WTC11 (cell line): ENCODE measurements at regions of chr14 and their contacts with region 1.

Region 1: DNA sequence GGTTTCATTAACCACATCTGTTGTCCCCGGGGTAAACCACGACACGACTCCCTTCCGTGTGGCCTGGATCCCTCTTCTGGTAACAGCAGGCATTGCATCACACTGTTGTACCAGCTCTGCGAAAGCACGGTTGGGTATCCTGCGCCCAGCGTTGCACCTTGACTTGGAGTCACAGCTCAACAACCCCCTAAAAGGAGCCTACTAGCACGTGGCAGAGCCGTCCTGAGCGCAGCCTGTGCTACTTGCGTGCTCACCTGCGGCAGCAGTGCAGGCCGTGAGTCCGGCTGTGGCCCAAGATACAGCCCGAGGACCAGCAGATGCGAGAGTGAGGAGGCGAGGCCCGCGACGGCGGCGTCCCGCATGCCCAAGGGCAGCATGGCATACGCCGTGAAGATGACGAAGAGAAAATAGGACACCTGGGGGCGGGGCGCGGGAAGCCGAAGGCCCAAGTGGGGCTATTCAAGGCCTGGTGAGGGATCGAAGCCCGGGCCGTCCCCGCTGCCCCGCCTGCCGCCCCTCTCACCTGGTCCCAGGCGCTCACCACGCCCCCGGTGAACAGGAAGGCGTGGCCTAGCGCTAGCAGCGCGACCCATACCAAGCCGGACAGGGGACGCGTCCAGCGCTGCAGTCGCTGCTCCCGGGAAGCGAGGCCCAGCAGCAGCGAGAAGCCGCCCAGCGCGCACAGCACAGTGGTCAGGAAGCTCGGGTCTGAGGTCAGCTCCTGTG is 2.4 kb downstream of the ADCY4 start:
- DNase-seq: peak; percentile 82
- ATAC-seq: peak; percentile 72
- H3K4me3 Mint-ChIP-seq: peak overlapping the region; percentile 78
- H3K27ac Mint-ChIP-seq: no peak overlapping the region
- H3K4me1 Mint-ChIP-seq: peaks cover 24% of the 10 kb centered on the region
- H3K27me3 Mint-ChIP-seq: peaks cover 92% of the 10 kb centered on the region
- CTCF ChIP-seq: peak; percentile 68

Region 2: DNA sequence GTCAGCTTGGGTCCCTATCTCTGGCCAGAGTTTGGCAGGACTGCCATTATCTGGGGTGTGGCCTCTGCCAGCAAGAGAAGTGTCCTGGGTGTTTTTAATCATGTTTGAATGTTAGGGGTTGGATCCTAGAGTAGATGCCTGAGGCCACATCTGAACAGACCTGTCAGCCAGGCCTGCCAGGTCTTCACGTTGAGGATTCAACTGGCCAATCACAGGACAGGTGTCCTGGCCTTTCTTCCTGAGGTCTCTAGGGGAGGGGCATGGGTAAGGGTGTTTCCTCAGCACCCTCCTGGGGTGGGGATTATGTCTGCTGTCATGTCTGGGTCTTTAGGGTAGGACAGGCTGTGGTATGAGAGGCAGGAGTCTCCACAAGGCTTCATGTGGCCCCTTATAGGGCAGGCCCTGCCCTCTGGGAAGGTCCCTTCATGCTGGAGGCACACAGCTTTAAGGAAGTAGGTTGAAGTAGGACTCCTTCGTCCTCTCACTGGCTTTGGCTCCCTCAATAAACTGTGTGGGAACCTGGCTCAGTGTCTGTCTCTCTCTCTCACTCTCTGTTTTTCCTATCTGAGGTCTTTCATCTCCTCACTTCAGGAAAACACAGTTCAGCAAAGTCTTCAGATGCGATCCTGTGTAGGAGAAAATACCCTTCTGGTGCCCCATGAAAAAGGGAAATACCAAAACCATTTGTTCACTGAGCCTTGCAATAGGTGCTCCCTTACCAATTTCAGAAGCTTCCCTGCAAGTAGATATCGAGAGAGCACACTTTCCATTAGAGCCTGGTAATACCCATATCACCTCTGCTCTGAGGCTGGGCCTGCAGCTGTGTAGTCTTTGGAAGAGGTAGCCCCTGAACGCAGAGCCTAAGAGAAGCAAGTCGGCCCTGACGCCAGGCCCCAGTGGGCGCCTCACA is 208.7 kb before region 1 on chr14:
- CTCF ChIA-PET with region 1: no interaction called
- POLR2A ChIA-PET with region 1: no interaction called
- DNase-seq: no peak
- ATAC-seq: peak; percentile 41; the same call in 1 of the 2 replicates
- H3K4me3 Mint-ChIP-seq: no peak overlapping the region
- H3K27ac Mint-ChIP-seq: no peak overlapping the region
- H3K4me1 Mint-ChIP-seq: no peaks in the 10 kb centered on the region
- H3K27me3 Mint-ChIP-seq: no peaks in the 10 kb centered on the region
- CTCF ChIP-seq: no peak

Region 3: DNA sequence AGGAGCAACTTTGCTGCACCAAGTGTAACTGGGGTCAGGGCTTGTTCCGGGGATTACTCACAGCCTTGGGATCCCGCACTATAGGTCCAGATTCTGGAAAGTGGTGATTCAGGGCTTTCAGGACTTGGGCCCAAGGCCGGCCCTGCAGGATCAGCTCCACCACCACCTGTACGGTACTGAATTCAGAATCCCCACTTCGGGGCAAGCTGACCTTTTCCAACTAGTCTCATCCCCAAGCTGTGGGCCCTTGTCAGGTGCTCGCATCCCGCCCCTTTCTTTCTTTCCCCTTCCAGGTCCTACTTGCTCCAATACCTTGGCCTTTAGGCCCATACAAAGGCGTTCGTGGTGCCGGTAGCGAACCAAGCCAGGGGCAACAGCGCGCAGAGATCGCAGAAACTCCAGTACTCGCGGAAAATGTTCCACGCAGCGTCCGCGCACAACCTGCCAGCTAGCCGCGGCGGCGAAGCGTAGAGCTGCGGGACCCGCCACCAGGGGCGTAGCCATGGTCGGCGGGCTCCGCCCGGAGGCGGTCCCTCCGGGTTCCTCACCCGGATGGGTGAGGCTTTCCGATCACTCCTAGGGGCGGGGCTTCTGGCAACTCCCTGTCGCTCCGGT is 90.5 kb before region 1 on chr14:
- CTCF ChIA-PET with region 1: interaction called, 32 read pairs
- POLR2A ChIA-PET with region 1: interaction called, 4 read pairs
- DNase-seq: peak; percentile 95
- ATAC-seq: peak; percentile 85
- H3K4me3 Mint-ChIP-seq: peak overlapping the region; percentile 93
- H3K27ac Mint-ChIP-seq: peak overlapping the region; percentile 97
- H3K4me1 Mint-ChIP-seq: peaks cover 13% of the 10 kb centered on the region
- H3K27me3 Mint-ChIP-seq: peaks cover 12% of the 10 kb centered on the region
- CTCF ChIP-seq: no peak

Region 4: DNA sequence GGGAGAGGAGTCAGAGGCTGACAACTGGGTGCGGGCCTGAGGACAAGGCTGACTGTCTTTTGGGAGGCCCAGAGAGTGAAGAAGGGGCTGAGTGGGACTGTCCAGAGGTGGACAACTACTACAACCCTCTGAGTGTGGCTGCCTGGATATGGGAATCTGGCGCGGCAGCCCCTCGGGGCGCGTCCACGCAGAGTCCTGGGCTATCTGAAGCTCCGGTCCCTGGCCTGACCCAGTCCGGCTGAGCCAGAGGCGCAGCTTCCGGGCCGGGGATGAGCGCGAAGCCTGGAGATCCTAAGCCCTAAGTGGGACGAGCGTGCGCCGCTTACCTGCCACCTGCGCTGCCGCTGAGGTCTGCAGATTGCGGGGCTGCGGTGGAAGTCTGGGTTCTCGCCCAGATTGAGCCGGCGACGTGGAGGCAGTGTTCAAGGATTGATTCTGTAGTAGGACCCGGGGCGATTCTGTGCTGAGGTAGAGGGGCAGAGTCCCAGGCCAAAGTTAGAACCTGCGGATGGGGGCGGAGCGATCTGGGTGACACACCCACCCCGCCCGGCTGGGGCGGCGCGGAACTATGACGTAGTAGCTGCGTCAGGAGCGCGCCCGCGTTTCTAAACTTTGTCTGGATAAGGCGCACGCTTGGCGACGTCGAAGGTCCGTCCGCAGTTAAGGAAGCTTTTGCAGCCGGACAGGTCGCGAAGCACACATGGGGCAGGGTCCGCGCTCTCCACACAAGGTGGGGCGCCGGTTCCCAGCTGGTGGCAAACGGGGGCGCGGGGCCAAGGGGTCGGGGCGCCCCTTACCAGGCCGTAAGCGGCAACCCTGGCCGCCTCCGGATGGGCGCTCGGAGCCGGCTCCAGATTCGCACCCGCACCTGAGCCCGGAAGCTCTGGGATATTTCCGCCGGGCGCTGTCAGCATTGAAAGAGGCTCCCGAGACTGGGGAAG is 32.9 kb before region 1 on chr14 and contains the starts of genes DHRS1 and NOP9:
- CTCF ChIA-PET with region 1: interaction called, 39 read pairs
- POLR2A ChIA-PET with region 1: no interaction called
- DNase-seq: peak; percentile 94
- ATAC-seq: peak; percentile 83
- H3K4me3 Mint-ChIP-seq: peak within 1 kb of the TSS; percentile 91
- H3K27ac Mint-ChIP-seq: peak within 1 kb of the TSS; percentile 89
- H3K4me1 Mint-ChIP-seq: peaks cover 19% of the 10 kb centered on the region
- H3K27me3 Mint-ChIP-seq: 0 out of 2 replicates have a peak, but pooled peaks cover 3% of the 10 kb centered on the region
- CTCF ChIP-seq: no peak
- total RNA-seq, gene DHRS1: 13.9 to 16.7 TPM (median 15.4 TPM) in 3 replicates
- total RNA-seq, gene NOP9: 34.3 to 44.4 TPM (median 35.0 TPM) in 3 replicates

Region 5: GRCh38 chr14:24315807-24316603 is 16.4 kb before region 1 on chr14:
- CTCF ChIA-PET with region 1: interaction called, 66 read pairs
- POLR2A ChIA-PET with region 1: no interaction called
- DNase-seq: peak; percentile 63
- ATAC-seq: peak; percentile 74
- H3K4me3 Mint-ChIP-seq: no peak overlapping the region
- H3K27ac Mint-ChIP-seq: no peak overlapping the region
- H3K4me1 Mint-ChIP-seq: no peaks in the 10 kb centered on the region
- H3K27me3 Mint-ChIP-seq: peaks cover 87% of the 10 kb centered on the region
- CTCF ChIP-seq: no peak

Region 6: DNA sequence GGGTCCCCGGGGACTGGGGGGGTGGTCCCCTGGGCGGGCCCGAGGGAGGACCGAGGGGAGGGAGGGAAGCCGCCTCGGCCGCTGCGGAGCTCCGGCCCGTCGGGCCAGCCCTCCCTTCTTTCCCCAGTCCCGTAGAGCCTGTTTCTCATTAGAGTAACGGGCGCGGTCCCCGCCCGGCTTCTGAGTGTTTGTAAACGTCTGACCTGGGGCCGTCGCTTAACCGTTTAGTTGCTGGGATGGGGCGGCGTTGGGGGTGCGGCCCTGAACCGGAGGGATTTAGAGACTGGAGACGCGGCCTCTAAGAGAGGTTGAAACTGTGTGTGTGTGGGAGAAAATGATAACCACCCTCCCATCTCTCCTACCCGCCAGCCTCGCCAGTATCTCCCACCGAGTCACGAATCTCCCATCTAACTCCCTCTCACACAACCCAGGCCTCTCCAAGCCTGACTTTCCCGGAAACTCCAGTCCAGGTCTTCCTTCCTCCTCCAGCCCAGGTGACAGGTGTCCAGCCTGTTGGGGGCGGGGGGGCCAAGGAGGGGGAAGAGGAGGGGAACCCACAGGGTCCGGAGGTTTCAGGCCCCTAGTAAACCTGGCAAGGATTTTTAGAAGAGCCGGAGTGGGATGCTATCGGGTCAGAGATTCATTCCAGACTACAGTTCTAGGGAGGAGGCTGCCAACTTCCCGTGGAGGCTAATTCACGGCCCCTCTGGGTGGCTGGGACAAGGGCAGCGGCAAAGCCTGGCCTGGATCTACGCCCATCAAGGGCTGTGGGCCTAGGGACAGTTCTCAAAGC is 34.5 kb after region 1 on chr14:
- CTCF ChIA-PET with region 1: interaction called, 43 read pairs
- POLR2A ChIA-PET with region 1: interaction called, 7 read pairs
- DNase-seq: peak; percentile 93
- ATAC-seq: peak; percentile 60
- H3K4me3 Mint-ChIP-seq: peak overlapping the region; percentile 90
- H3K27ac Mint-ChIP-seq: peak overlapping the region; percentile 96
- H3K4me1 Mint-ChIP-seq: peaks cover 15% of the 10 kb centered on the region
- H3K27me3 Mint-ChIP-seq: peaks cover 18% of the 10 kb centered on the region
- CTCF ChIP-seq: no peak

Region 7: GRCh38 chr14:24398653-24399446 is 66.4 kb after region 1 on chr14 and contains the start of gene NYNRIN:
- CTCF ChIA-PET with region 1: interaction called, 28 read pairs
- POLR2A ChIA-PET with region 1: no interaction called
- DNase-seq: peak; percentile 70
- ATAC-seq: peak; percentile 83
- H3K4me3 Mint-ChIP-seq: peak within 1 kb of the TSS; percentile 83
- H3K27ac Mint-ChIP-seq: no peak within 1 kb of the TSS
- H3K4me1 Mint-ChIP-seq: peaks cover 53% of the 10 kb centered on the region
- H3K27me3 Mint-ChIP-seq: peaks cover 14% of the 10 kb centered on the region
- CTCF ChIP-seq: no peak
- total RNA-seq, gene NYNRIN: 16.6 to 18.3 TPM (median 17.9 TPM) in 3 replicates

Region 8: GRCh38 chr14:24442273-24443052 is 110.0 kb after region 1 on chr14 and contains the start of gene SDR39U1:
- CTCF ChIA-PET with region 1: interaction called, 83 read pairs
- POLR2A ChIA-PET with region 1: interaction called, 9 read pairs
- DNase-seq: peak; percentile 93
- ATAC-seq: peak; percentile 92
- H3K4me3 Mint-ChIP-seq: peak within 1 kb of the TSS; percentile 88
- H3K27ac Mint-ChIP-seq: peak within 1 kb of the TSS; percentile 99
- H3K4me1 Mint-ChIP-seq: peaks cover 10% of the 10 kb centered on the region
- H3K27me3 Mint-ChIP-seq: no peaks in the 10 kb centered on the region
- CTCF ChIP-seq: no peak
- total RNA-seq, gene SDR39U1: 55.0 to 59.2 TPM (median 56.7 TPM) in 3 replicates